ENCODE measurements at regions of chr9 and their contacts with region 1.

Region 1: DNA sequence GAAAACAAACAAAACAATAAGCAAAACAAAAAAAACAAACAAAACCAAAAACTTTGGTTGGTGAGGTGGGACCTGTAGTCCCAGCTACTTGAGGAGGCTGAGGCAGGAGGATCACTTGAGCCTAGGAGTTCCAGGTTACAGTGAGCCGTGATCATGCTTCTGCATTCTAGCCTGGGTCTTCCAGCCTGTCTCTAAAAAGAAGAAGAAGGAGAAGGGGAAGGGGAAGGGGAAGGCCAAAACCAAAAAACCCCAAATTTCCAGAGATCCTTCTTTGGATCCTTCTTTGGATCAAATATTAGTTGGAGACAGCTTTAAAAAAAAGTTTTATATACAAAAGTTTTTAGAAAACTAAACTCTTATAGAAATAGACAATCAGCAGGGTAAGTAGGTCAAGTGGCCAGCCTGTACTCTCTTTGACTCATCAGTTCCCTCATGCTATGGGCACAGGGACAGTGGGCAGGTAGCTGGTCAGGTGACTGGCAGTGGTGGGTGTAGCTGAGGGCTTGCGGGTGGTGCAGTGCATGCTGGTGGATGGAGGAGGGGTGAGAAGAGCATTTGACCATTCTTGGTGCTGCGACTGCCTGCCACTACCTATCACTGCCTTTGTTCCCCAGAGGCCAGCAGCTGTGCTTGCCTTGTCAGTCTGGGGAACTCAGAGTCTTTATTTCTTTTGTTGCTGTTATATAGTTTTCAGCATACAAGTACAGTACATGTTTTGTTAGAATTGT is 12.6 kb downstream of the RCL1 start:
- DNase-seq: no peak
- H3K4me3 ChIP-seq: no peak overlapping the region
- H3K27ac ChIP-seq: no peak overlapping the region
- H3K4me1 ChIP-seq: no peaks in the 10 kb centered on the region
- H3K27me3 ChIP-seq: no peaks in the 10 kb centered on the region
- CTCF ChIP-seq: no peak
- POLR2A ChIP-seq: no peak

Region 2: GRCh38 chr9:4831119-4831518 is 25.8 kb after region 1 on chr9:
- intact Hi-C with region 1: loop called (anchors 1 kb)
- DNase-seq: no peak
- H3K4me3 ChIP-seq: no peak overlapping the region
- H3K27ac ChIP-seq: no peak overlapping the region
- H3K4me1 ChIP-seq: no peaks in the 10 kb centered on the region
- H3K27me3 ChIP-seq: no peaks in the 10 kb centered on the region
- CTCF ChIP-seq: no peak
- POLR2A ChIP-seq: no peak

Region 3: GRCh38 chr9:5013374-5013773 is 208.0 kb after region 1 on chr9:
- intact Hi-C with region 1: no loop called
- DNase-seq: no peak
- H3K4me3 ChIP-seq: no peak overlapping the region
- H3K27ac ChIP-seq: no peak overlapping the region
- H3K4me1 ChIP-seq: no peaks in the 10 kb centered on the region
- H3K27me3 ChIP-seq: no peaks in the 10 kb centered on the region
- CTCF ChIP-seq: no peak
- POLR2A ChIP-seq: no peak